KBM-7 (cell line): ENCODE measurements at regions of chr1 and their contacts with region 1.

Region 1: DNA sequence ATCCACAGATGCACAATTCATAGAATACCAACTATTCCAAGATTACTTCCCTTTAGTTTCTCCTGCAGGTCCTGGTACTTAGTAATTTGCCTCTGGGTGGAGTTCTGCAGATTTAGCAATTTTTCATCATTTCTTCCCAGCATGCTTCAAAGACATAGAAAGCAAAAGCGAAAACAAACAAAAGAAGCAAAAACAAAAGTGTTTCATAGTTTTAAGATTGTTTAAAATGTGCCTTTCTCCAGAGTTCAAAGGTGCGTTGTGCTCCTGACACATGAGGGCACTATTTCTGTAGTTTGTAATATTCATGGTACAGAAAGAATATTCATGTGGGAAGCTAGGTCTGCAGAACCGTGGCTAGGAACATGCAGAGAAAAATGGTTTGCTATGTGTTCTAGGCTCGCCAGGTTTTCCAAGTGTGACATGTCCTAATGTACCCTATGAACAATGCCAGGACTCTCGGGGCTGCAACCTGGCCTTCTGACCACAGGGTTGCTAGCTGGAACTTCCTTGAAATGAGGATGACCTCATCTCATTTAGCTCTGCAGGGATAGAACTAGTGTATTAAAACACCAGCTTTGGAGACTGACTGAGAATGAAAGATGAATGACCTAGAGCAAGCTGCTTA is 30.0 kb upstream of the RCSD1 start:
- DNase-seq: peak; percentile 72

Region 2: DNA sequence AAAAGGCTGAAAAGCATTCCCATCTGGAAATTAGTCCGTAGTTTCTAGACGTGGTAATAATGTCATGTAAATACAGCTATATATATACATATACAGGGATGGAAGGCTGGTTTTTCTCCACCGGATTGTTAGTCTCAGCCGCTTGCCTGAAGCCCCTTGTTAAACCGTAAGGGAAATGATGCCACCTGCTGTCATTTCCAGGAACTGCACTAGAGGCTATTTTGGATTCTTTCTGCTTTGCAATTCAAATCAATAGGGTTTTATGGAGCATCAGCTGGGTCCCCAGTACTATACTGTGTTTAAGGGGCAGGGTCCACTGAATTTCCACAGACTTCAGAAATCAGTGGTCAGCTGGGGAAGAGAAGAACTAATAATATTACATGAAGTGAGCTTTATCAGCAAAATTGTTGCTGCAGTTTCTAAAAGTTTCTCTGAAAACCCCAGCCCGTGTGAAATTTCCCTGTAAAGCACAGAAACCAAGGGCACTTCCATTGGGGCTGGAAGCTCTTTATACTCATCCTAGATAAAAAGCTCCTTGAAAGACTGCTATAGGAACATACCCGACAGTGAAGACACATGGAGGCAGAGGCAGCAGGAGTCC is 88.0 kb after region 1 on chr1:
- in situ Hi-C with region 1: loop called (anchors 10 kb)
- DNase-seq: peak; percentile 88